ENCODE measurements at regions of chr5 and their contacts with region 1.

Region 1: DNA sequence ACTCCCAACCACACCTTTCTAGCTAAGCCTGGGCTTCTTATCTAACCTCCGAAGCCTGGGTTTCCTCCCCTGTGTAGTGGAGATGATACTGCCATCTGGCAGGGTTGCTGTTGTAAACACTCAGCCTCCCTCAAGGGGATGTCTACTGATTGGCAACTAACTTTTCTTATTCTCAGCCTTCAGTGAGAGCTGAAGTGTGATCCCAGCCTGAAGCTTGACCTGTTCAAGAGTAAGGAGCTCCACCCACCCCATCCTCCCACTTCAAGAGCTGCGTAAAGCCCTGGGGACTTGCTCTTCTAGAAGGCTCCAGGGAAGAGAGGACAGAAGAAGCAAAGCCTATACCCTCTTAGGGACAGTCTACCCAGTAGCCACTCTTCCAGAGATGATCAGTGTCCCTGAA is 21.4 kb upstream of the WWC1 start:
- DNase-seq: peak in 1 of 2 donors; percentile 43
- H3K4me3 ChIP-seq: no peak overlapping the region
- H3K27ac ChIP-seq: peak overlapping the region in 4 of 5 donors; percentile 25 to 58 (median 30)
- H3K4me1 ChIP-seq: peaks cover 8 to 22% (median 17%) of the 10 kb centered on the region in 4 donors
- H3K27me3 ChIP-seq: no peaks in the 10 kb centered on the region
- CTCF ChIP-seq: no peak
- EP300 ChIP-seq: no peak
- POLR2A ChIP-seq: no peak

Region 2: GRCh38 chr5:168422431-168422830 is 152.4 kb after region 1 on chr5:
- intact Hi-C with region 1: loop called (anchors 10 kb)
- DNase-seq: peak in 1 of 2 donors; percentile 32
- H3K4me3 ChIP-seq: no peak overlapping the region
- H3K27ac ChIP-seq: no peak overlapping the region
- H3K4me1 ChIP-seq: peaks cover 0 to 7% (median 5%) of the 10 kb centered on the region in 4 donors
- H3K27me3 ChIP-seq: no peaks in the 10 kb centered on the region
- CTCF ChIP-seq: peak in 3 of 7 experiments; percentile 31 to 53 (median 38)
- EP300 ChIP-seq: no peak
- POLR2A ChIP-seq: no peak